ENCODE measurements at regions of chr7 and their contacts with region 1.

Region 1: GRCh38 chr7:4830176-4830575 is 31.7 kb downstream of the PAPOLB start:
- DNase-seq: peak; percentile 95
- H3K4me3 ChIP-seq: no peak overlapping the region; a peak in 1 of 4 replicates
- H3K27ac ChIP-seq: no peak overlapping the region; a peak in 1 of 4 replicates
- H3K4me1 ChIP-seq: peaks cover 0 to 5% of the 10 kb centered on the region in 2 experiments; a peak in 1 of 4 replicates
- H3K27me3 ChIP-seq: no peaks in the 10 kb centered on the region
- CTCF ChIP-seq: peak; percentile 72
- EP300 ChIP-seq: no peak; a peak in 1 of 4 replicates
- RAD21 ChIP-seq: peak; percentile 98

Region 2: DNA sequence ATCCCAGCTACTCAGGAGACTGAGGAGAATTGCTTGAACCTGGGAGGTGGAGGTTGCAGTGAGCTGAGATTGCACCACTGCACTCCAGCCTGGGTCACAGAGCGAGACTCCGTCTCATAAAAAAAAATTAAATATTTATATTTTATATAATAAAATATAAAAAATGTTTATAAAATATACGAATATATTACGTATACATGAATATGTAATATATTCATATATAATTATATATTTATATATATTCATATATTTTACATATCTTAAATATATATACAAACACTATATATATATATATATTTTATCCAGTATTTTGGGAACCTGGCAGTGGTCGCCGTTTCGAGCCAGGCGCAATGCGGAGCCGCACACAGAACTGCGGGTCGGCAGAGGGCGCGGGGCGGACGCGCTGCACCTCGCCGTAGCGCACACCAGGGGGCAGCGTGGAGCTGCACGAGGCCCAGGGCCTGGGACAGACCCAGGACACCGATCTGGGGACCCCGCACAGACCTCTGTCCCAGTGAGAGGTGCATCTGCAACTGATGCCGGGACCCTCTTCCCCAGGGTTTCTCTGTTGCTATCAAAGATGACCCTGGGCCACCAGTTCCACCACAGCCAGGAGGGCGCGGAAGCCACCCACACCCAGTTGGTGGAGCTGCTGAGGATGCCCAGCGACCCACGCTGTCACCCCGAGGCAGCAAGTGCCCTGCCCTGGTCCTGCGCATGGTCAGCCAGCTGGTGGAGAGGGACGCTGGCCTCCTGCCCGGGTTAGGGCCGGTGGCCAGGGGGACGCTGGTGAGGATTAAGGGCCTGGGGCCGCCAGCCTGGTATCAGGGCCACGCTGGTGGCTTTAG is 32.1 kb before region 1 on chr7:
- CTCF ChIA-PET with region 1: interaction called, 44 read pairs
- POLR2A ChIA-PET with region 1: interaction called, 3 read pairs
- DNase-seq: peak; percentile 97
- H3K4me3 ChIP-seq: no peak overlapping the region
- H3K27ac ChIP-seq: peak overlapping the region in 1 of 2 experiments; percentile 41; a peak in 1 of 4 replicates
- H3K4me1 ChIP-seq: peaks cover 0 to 9% of the 10 kb centered on the region in 2 experiments; a peak in 1 of 4 replicates
- H3K27me3 ChIP-seq: no peaks in the 10 kb centered on the region
- CTCF ChIP-seq: peak; percentile 76
- EP300 ChIP-seq: no peak
- RAD21 ChIP-seq: peak; percentile 69

Region 3: DNA sequence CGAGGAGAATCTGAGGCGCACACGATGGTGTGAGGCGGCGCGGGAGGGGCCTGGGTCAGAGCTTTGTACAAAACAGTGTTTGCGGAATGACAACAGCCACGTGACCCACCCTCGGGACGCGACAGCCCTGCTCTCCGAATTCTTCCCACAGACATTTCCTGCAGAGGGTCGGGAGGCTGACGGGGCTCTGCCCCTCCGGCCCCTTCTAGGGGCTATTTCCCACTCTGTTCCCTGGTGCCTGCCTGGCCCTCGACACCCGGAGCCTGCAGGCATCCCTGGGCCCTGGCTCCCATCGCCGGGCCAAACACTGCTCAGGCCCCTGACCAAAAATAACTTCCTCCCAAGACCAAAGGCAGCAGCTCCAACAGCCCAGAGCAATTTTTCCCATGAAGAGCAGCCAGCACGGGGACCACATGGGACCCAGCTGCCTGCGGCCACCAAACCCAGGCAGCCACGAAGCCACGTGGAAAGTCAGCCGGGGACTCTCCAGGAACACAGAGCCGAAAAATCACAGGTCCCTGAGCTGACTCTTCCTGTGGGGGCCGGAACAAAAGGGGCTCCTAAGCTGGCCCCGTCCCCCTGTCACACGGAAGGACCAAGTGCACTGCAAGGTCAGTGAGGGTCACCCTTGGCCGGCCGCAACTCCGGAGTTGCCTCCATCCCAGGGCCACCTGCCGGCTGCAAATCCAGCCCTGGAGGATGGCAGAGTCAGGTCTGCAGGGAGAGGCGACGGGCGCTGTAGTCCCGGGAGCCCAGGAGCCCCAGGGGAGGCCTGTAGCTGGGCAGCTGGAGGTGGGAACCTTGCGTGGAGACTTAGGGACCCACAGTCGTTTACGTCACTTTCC is 10.4 kb before region 1 on chr7:
- CTCF ChIA-PET with region 1: interaction called, 28 read pairs
- POLR2A ChIA-PET with region 1: interaction called, 3 read pairs
- DNase-seq: peak; percentile 41
- H3K4me3 ChIP-seq: no peak overlapping the region
- H3K27ac ChIP-seq: no peak overlapping the region
- H3K4me1 ChIP-seq: no peaks in the 10 kb centered on the region; a peak in 1 of 4 replicates
- H3K27me3 ChIP-seq: no peaks in the 10 kb centered on the region
- CTCF ChIP-seq: no peak
- EP300 ChIP-seq: no peak
- RAD21 ChIP-seq: no peak

Region 4: GRCh38 chr7:4856336-4857057 is 26.3 kb after region 1 on chr7:
- CTCF ChIA-PET with region 1: interaction called, 24 read pairs
- POLR2A ChIA-PET with region 1: no interaction called
- DNase-seq: peak; percentile 85
- H3K4me3 ChIP-seq: no peak overlapping the region
- H3K27ac ChIP-seq: peak overlapping the region in 1 of 2 experiments; percentile 82; a peak in 2 of 4 replicates
- H3K4me1 ChIP-seq: peaks cover 0 to 11% of the 10 kb centered on the region in 2 experiments; a peak in 2 of 4 replicates
- H3K27me3 ChIP-seq: no peaks in the 10 kb centered on the region
- CTCF ChIP-seq: no peak
- EP300 ChIP-seq: peak in 1 of 2 experiments; percentile 48; a peak in 2 of 4 replicates
- RAD21 ChIP-seq: no peak; the same call in 1 of the 2 replicates

Region 5: DNA sequence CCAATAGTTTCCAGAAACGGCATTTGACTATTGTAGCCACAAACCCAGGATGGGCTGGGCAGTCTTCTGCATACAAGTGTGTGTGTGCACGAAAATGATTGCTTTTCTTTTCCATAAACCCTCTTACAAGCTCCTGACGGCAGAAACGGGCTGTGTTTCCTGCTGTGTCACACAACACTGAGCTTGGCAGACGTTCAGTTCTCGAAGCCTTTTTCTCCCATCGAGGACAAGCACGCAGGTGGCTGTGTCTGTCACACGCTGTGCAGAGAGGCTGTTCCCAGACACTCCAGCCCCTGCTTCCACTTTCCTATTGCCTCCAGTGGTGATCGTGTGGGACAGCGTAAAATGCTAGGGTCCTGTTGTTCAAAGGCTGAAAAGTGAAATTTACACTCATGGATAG is 247.6 kb after region 1 on chr7:
- CTCF ChIA-PET with region 1: interaction called, 12 read pairs
- POLR2A ChIA-PET with region 1: no interaction called
- DNase-seq: peak; percentile 47
- H3K4me3 ChIP-seq: peak overlapping the region; percentile 2 to 9; a peak in 1 of 4 replicates
- H3K27ac ChIP-seq: no peak overlapping the region
- H3K4me1 ChIP-seq: peaks cover 0 to 5% of the 10 kb centered on the region in 2 experiments; a peak in 1 of 4 replicates
- H3K27me3 ChIP-seq: peaks cover 18% of the 10 kb centered on the region; the same call in 1 of the 2 replicates
- CTCF ChIP-seq: no peak
- EP300 ChIP-seq: no peak
- RAD21 ChIP-seq: no peak

Region 6: DNA sequence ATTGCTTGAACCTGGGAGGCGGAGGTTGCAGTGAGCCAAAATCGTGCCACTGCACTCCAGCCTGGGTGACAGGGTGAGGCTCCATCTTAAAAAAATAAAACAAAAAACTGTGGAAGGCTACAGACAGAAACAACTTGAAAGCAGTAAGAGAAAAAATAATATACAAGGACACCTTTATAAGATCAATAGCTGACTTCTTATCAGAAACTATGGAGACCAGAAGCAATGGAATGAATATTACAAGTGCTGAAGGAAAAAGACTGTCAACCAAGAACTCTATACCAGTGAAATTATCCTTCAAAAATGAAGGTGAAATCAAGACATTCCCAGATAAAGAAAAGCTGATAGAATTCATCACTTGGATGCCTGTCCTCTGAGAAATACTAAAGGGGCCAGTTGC is 264.5 kb after region 1 on chr7:
- CTCF ChIA-PET with region 1: interaction called, 10 read pairs
- POLR2A ChIA-PET with region 1: no interaction called
- DNase-seq: no peak
- H3K4me3 ChIP-seq: no peak overlapping the region
- H3K27ac ChIP-seq: no peak overlapping the region
- H3K4me1 ChIP-seq: no peaks in the 10 kb centered on the region
- H3K27me3 ChIP-seq: no peaks in the 10 kb centered on the region
- CTCF ChIP-seq: no peak
- EP300 ChIP-seq: no peak
- RAD21 ChIP-seq: no peak